CD4-positive, alpha-beta T cell (primary cell): ENCODE measurements at regions of chr10 and their contacts with region 1.

Region 1: GRCh38 chr10:92290837-92291615 is at the starts of genes CPEB3 and MARCHF5:
- DNase-seq: peak; percentile 80 to 97 (median 87)
- ATAC-seq: peak; percentile 97
- H3K4me3 ChIP-seq: peak within 1 kb of the TSS; percentile 97
- H3K4me3 Mint-ChIP-seq: peak within 1 kb of the TSS; percentile 97
- H3K27ac ChIP-seq: peak within 1 kb of the TSS; percentile 37 to 50
- H3K27ac Mint-ChIP-seq: peak within 1 kb of the TSS; percentile 87
- H3K4me1 ChIP-seq: peaks cover 29% of the 10 kb centered on the region
- H3K4me1 Mint-ChIP-seq: peaks cover 33% of the 10 kb centered on the region
- H3K27me3 ChIP-seq: no peaks in the 10 kb centered on the region
- H3K27me3 Mint-ChIP-seq: no peaks in the 10 kb centered on the region
- CTCF ChIP-seq: peak; percentile 44
- total RNA-seq, gene CPEB3: 1.2 to 1.3 TPM
- total RNA-seq, gene MARCHF5: 33.5 to 36.1 TPM

Region 2: DNA sequence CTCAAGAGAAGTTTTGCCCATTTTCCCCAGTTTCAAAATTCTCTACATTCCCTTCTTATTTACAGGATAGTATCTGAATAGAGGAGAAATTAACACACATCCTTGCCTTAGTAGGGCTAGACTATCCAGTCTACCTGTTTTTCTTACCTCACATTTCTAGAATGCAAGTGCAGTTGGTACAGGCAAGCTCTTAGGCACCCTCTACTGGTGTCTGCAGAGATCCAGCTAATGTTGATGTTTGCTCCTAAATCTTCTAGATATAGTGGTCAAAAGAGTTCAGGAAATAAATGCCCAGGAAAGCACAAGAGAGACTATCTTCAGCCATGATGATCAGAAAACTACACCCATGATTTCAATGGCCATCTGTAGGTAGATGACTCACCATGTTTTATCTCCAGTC is 1638.5 kb before region 1 on chr10:
- CTCF ChIA-PET with region 1: no interaction called
- POLR2A ChIA-PET with region 1: no interaction called
- intact Hi-C with region 1: no loop called
- DNase-seq: no peak
- ATAC-seq: no peak
- H3K4me3 ChIP-seq: no peak overlapping the region
- H3K4me3 Mint-ChIP-seq: no peak overlapping the region
- H3K27ac ChIP-seq: no peak overlapping the region
- H3K27ac Mint-ChIP-seq: no peak overlapping the region
- H3K4me1 ChIP-seq: no peaks in the 10 kb centered on the region
- H3K4me1 Mint-ChIP-seq: no peaks in the 10 kb centered on the region
- H3K27me3 ChIP-seq: no peaks in the 10 kb centered on the region
- H3K27me3 Mint-ChIP-seq: peaks cover 14% of the 10 kb centered on the region
- CTCF ChIP-seq: no peak

Region 3: GRCh38 chr10:92087750-92088395 is 203.2 kb before region 1 on chr10:
- CTCF ChIA-PET with region 1: interaction called, 9 read pairs
- POLR2A ChIA-PET with region 1: no interaction called
- intact Hi-C with region 1: loop called (anchors 1 to 5 kb)
- DNase-seq: peak; percentile 7 to 69 (median 34)
- ATAC-seq: peak; percentile 91
- H3K4me3 ChIP-seq: no peak overlapping the region
- H3K4me3 Mint-ChIP-seq: no peak overlapping the region
- H3K27ac ChIP-seq: no peak overlapping the region
- H3K27ac Mint-ChIP-seq: no peak overlapping the region
- H3K4me1 ChIP-seq: no peaks in the 10 kb centered on the region
- H3K4me1 Mint-ChIP-seq: no peaks in the 10 kb centered on the region
- H3K27me3 ChIP-seq: no peaks in the 10 kb centered on the region
- H3K27me3 Mint-ChIP-seq: no peaks in the 10 kb centered on the region
- CTCF ChIP-seq: peak; percentile 61

Region 4: GRCh38 chr10:92240289-92241157 is 50.5 kb before region 1 on chr10:
- CTCF ChIA-PET with region 1: no interaction called
- POLR2A ChIA-PET with region 1: interaction called, 28 read pairs
- intact Hi-C with region 1: loop called (anchors 5 kb)
- DNase-seq: peak in 8 of 14 experiments; percentile 3 to 73 (median 34)
- ATAC-seq: peak; percentile 42
- H3K4me3 ChIP-seq: peak overlapping the region; percentile 86
- H3K4me3 Mint-ChIP-seq: peak overlapping the region; percentile 92
- H3K27ac ChIP-seq: peak overlapping the region in 1 of 2 donors; percentile 1
- H3K27ac Mint-ChIP-seq: peak overlapping the region; percentile 58
- H3K4me1 ChIP-seq: peaks cover 16% of the 10 kb centered on the region
- H3K4me1 Mint-ChIP-seq: peaks cover 44% of the 10 kb centered on the region
- H3K27me3 ChIP-seq: no peaks in the 10 kb centered on the region
- H3K27me3 Mint-ChIP-seq: no peaks in the 10 kb centered on the region
- CTCF ChIP-seq: no peak

Region 5: GRCh38 chr10:92573798-92574547 is 282.9 kb after region 1 on chr10 and contains the start of gene IDE:
- CTCF ChIA-PET with region 1: interaction called, 4 read pairs
- POLR2A ChIA-PET with region 1: interaction called, 10 read pairs
- intact Hi-C with region 1: loop called in 1 of 2 experiments (anchors 5 kb)
- DNase-seq: peak; percentile 64 to 91 (median 76)
- ATAC-seq: peak; percentile 73
- H3K4me3 ChIP-seq: peak within 1 kb of the TSS; percentile 96
- H3K4me3 Mint-ChIP-seq: peak within 1 kb of the TSS; percentile 93
- H3K27ac ChIP-seq: peak within 1 kb of the TSS; percentile 77
- H3K27ac Mint-ChIP-seq: peak within 1 kb of the TSS; percentile 88
- H3K4me1 ChIP-seq: peaks cover 19% of the 10 kb centered on the region
- H3K4me1 Mint-ChIP-seq: peaks cover 40% of the 10 kb centered on the region
- H3K27me3 ChIP-seq: no peaks in the 10 kb centered on the region
- H3K27me3 Mint-ChIP-seq: no peaks in the 10 kb centered on the region
- CTCF ChIP-seq: peak; percentile 91
- total RNA-seq, gene IDE: 15.2 to 17.8 TPM

Region 6: DNA sequence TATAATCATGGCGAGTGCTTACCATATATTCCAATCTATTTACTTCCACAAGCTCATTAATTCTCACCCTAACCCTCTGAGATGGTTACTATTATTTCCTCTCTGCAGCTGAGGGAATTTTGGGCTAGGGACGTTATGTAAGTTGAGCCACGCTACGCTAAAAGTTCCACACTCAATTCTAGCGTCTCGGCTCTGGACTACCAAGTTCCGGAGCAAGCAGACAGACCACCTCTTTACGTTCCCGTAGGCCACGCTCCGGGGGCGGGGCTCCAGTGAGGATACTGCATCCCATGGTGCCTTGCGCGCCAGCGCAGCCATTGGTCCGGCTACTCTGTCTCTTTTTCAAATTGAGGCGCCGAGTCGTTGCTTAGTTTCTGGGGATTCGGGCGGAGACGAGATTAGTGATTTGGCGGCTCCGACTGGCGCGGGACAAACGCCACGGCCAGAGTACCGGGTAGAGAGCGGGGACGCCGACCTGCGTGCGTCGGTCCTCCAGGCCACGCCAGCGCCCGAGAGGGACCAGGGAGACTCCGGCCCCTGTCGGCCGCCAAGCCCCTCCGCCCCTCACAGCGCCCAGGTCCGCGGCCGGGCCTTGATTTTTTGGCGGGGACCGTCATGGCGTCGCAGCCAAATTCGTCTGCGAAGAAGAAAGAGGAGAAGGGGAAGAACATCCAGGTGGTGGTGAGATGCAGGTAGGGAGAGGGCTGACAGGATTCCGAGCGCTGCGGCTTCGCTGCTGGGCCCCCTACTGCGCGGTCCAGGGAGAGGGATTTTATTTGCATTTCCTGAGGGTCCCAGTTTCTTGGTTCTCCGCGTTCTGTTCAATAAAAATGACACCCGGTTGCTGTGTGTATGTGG is 302.0 kb after region 1 on chr10 and contains the start of gene KIF11:
- CTCF ChIA-PET with region 1: no interaction called
- POLR2A ChIA-PET with region 1: interaction called, 9 read pairs
- intact Hi-C with region 1: loop called in 1 of 2 experiments (anchors 2 kb)
- DNase-seq: peak; percentile 91 to 98 (median 96)
- ATAC-seq: peak; percentile 81
- H3K4me3 ChIP-seq: peak within 1 kb of the TSS; percentile 75
- H3K4me3 Mint-ChIP-seq: peak within 1 kb of the TSS; percentile 99
- H3K27ac ChIP-seq: peak within 1 kb of the TSS; percentile 84 to 89
- H3K27ac Mint-ChIP-seq: peak within 1 kb of the TSS; percentile 99
- H3K4me1 ChIP-seq: peaks cover 38% of the 10 kb centered on the region
- H3K4me1 Mint-ChIP-seq: peaks cover 29% of the 10 kb centered on the region
- H3K27me3 ChIP-seq: no peaks in the 10 kb centered on the region
- H3K27me3 Mint-ChIP-seq: no peaks in the 10 kb centered on the region
- CTCF ChIP-seq: no peak
- total RNA-seq, gene KIF11: 0.38 to 0.47 TPM

Region 7: GRCh38 chr10:93190372-93190771 is 899.3 kb after region 1 on chr10:
- CTCF ChIA-PET with region 1: no interaction called
- POLR2A ChIA-PET with region 1: no interaction called
- intact Hi-C with region 1: no loop called
- DNase-seq: no peak
- ATAC-seq: no peak
- H3K4me3 ChIP-seq: no peak overlapping the region
- H3K4me3 Mint-ChIP-seq: no peak overlapping the region
- H3K27ac ChIP-seq: no peak overlapping the region
- H3K27ac Mint-ChIP-seq: no peak overlapping the region
- H3K4me1 ChIP-seq: no peaks in the 10 kb centered on the region
- H3K4me1 Mint-ChIP-seq: no peaks in the 10 kb centered on the region
- H3K27me3 ChIP-seq: peaks cover 2 to 9% of the 10 kb centered on the region in 2 experiments
- H3K27me3 Mint-ChIP-seq: peaks cover 19% of the 10 kb centered on the region
- CTCF ChIP-seq: no peak